Activated B cell treated with CpG ODN at 0.5 μM for 24 hours (primary cell): ENCODE measurements at regions of chr6 and their contacts with region 1.

Region 1: GRCh38 chr6:31834434-31835198 is 7.1 kb downstream of the HSPA1B start:
- DNase-seq: peak; percentile 75
- ATAC-seq: peak; percentile 62
- H3K4me3 Mint-ChIP-seq: peak overlapping the region; percentile 99
- H3K27ac Mint-ChIP-seq: peak overlapping the region; percentile 98
- H3K4me1 Mint-ChIP-seq: peaks cover 71% of the 10 kb centered on the region
- H3K27me3 Mint-ChIP-seq: no peaks in the 10 kb centered on the region
- CTCF ChIP-seq: no peak

Region 2: GRCh38 chr6:31597006-31597405 is 237.6 kb before region 1 on chr6:
- CTCF ChIA-PET with region 1: interaction called, 17 read pairs
- POLR2A ChIA-PET with region 1: interaction called, 12 read pairs
- intact Hi-C with region 1: loop called (anchors 1 kb)
- DNase-seq: no peak
- ATAC-seq: peak; percentile 73
- H3K4me3 Mint-ChIP-seq: peak overlapping the region; percentile 25
- H3K27ac Mint-ChIP-seq: peak overlapping the region; percentile 75
- H3K4me1 Mint-ChIP-seq: peaks cover 58% of the 10 kb centered on the region
- H3K27me3 Mint-ChIP-seq: no peaks in the 10 kb centered on the region
- CTCF ChIP-seq: no peak

Region 3: DNA sequence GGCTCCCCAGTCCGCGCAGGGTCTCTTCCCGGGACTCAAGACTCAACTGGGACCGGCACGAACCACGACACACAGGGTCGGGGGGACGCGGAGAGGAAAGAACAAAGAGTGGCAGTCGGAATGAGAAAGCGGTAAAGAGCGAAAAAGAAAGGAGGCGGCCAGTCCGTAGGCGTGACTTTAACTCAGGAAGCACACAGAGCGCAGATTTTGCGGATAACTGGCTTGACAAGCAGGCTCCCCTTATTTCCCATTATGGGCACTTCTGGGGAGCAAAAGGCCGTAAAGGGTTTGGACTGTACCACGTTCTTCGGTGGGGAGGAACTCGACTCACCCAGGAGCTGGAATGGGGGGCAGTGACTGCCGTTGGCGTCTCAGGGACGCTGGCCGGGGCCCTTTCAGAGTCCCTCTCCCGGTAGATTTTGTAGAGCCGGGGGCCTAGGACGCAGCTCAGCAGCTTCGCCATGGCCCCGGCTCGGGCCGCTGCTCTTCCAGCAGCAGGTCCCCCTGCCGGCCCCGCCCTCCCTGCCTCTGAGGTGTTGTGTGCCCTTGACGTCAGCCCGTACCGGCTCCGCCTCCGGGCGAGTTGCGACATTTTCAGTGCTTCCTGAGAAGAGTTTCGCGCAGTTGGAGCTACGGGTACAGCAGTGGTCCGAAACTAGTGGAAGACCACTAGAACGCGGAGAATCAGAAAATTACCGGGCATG is 131.6 kb before region 1 on chr6 and contains the start of gene ABHD16A:
- CTCF ChIA-PET with region 1: no interaction called
- POLR2A ChIA-PET with region 1: interaction called, 10 read pairs
- intact Hi-C with region 1: no loop called
- DNase-seq: peak; percentile 94
- ATAC-seq: peak; percentile 93
- H3K4me3 Mint-ChIP-seq: peak within 1 kb of the TSS; percentile 99
- H3K27ac Mint-ChIP-seq: peak within 1 kb of the TSS; percentile 89
- H3K4me1 Mint-ChIP-seq: peaks cover 28% of the 10 kb centered on the region
- H3K27me3 Mint-ChIP-seq: no peaks in the 10 kb centered on the region
- CTCF ChIP-seq: no peak
- total RNA-seq, gene ABHD16A: 49.3 and 59.1 TPM in 2 replicates

Region 4: DNA sequence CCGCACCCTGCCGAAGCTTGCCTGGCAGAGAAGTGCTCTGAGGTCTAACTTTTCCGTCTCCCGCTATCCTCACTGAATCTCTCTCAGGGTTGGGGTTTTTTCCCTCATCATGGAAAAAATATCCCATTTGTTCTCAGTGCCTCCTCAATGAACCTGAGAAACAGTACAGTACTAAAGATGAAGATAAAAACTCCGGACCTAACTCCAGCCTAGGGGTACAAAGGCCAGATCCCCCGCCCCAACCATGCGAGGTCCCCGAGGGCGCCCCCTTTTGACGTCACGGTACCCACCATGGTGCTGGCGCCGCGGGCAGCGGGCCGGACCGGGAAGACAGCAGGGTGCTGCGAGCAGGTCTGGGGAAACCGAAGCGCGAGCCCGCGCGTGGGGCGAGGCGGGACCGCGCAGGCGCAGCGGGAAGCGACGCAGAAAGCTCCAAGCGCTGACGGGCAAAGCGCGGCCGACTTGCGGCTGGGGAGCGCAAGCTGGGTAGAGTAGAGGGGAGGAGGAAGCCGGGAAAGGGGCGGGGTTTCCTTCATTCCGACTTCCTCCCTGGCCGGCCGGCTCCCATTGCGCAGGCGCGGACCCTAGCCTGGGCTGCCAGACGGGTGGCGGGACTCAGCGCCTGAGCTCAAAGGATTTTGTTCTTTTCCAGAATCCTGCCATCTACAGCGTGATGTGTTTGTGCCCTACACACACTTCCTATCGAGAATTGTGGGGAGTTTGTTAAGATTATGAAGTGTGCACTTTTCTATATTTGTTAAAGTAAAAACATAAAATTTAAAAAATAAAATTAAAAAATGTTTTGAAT is 27.9 kb before region 1 on chr6 and contains the start of gene LSM2:
- CTCF ChIA-PET with region 1: interaction called, 3 read pairs
- POLR2A ChIA-PET with region 1: interaction called, 18 read pairs
- intact Hi-C with region 1: no loop called
- DNase-seq: peak; percentile 89
- ATAC-seq: peak; percentile 98
- H3K4me3 Mint-ChIP-seq: peak within 1 kb of the TSS; percentile 94
- H3K27ac Mint-ChIP-seq: peak within 1 kb of the TSS; percentile 89
- H3K4me1 Mint-ChIP-seq: peaks cover 16% of the 10 kb centered on the region
- H3K27me3 Mint-ChIP-seq: no peaks in the 10 kb centered on the region
- CTCF ChIP-seq: no peak
- total RNA-seq, gene LSM2: 61.8 and 68.6 TPM in 2 replicates

Region 5: GRCh38 chr6:31862344-31863227 is 28.0 kb after region 1 on chr6 and contains the start of gene NEU1:
- CTCF ChIA-PET with region 1: interaction called, 4 read pairs
- POLR2A ChIA-PET with region 1: interaction called, 133 read pairs
- intact Hi-C with region 1: loop called (anchors 1 kb)
- DNase-seq: peak; percentile 93
- ATAC-seq: peak; percentile 91
- H3K4me3 Mint-ChIP-seq: peak within 1 kb of the TSS; percentile 95
- H3K27ac Mint-ChIP-seq: peak within 1 kb of the TSS; percentile 93
- H3K4me1 Mint-ChIP-seq: peaks cover 21% of the 10 kb centered on the region
- H3K27me3 Mint-ChIP-seq: no peaks in the 10 kb centered on the region
- CTCF ChIP-seq: no peak
- total RNA-seq, gene NEU1: 18.3 and 19.2 TPM in 2 replicates

Region 6: GRCh38 chr6:32313964-32314363 is 479.3 kb after region 1 on chr6:
- CTCF ChIA-PET with region 1: no interaction called
- POLR2A ChIA-PET with region 1: no interaction called
- intact Hi-C with region 1: no loop called
- DNase-seq: no peak
- ATAC-seq: no peak
- H3K4me3 Mint-ChIP-seq: no peak overlapping the region
- H3K27ac Mint-ChIP-seq: no peak overlapping the region
- H3K4me1 Mint-ChIP-seq: no peaks in the 10 kb centered on the region
- H3K27me3 Mint-ChIP-seq: no peaks in the 10 kb centered on the region
- CTCF ChIP-seq: no peak